GM18951 (cell line): ENCODE measurements at regions of chr17 and their contacts with region 1.

Region 1: DNA sequence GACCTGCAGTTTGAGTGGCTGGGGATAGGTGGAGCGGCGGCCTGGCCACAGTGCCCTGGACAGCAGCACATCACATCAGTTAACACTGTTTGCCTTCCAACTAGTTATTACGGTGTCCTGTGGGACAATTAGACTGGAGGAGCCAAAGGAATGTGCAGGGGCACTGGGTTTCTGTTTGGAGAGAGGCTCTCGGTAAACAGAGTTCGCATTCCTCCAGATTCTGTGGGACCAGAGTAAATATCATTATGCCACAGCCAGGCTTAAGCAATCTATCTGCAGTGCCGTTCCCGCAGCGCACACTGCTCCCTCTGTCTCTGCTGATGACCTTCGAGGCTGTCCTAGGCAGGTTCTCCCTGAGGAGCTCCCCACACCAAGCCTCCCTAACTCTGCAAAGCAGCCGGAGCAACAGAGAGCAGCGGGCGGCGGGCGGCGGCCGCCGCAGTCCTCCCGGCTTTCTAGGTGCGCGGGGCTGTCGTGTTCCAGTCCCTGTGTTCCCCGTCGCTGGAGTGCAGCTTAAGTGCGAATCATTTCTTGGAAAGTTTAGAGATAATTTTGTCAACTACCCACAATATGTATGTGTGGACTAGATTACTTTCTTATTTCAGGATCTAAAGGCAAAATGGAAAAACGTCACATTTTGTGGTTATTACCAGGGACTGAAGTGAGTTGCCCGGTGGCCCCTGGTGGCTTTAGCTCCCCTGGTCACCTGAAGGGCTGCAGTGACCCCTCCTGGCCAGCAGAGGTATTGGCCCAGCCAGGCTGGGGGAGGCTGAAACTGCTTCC is 43.2 kb downstream of the PGS1 start:
- POLR2A ChIP-seq: no peak

Region 2: GRCh38 chr17:78313735-78314648 is 107.7 kb before region 1 on chr17:
- in situ Hi-C with region 1: no loop called
- POLR2A ChIP-seq: peak; percentile 53

Region 3: DNA sequence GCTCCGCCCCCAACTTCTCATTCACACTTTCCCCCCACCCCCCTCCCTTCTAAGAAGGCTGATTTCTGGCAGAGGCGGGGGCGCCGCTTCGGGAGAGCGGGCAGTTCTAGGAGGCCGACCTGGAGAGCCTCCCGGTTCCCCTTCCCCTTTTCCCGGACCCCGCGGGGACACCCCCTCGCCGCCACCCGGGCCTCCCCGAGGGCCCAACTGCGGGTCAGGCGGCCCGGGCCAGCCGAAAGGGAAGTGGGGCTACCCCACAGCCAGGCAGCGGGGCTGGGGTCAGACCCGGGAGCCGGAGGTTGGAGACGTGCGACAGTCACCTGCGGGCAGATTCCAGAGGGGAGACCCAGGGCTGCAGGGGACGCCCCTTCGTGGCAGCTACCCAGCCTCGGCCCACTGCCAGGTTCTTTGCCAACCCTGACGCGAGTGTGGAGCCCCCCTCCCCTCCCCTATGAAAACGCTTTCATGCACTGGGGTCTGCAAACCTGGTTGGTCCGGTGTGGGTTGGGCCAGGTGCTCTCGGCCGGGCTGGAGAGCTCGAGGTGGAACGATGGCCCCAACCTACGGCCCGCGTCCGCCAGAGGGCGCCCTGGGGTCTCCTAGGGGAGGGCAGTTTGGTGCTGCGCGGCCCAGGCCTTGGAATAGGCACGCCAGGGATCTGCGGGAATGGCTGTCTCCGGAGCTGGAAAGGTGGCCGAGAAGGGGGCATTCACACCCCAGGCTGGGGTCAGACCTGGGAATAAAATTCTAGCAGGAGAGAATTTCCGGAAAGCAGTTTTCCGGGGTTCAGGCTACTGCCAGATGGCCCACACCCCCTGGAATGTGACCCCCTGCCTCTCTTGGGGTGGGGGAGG is 61.1 kb before region 1 on chr17:
- in situ Hi-C with region 1: loop called (anchors 10 kb)
- POLR2A ChIP-seq: no peak

Region 4: DNA sequence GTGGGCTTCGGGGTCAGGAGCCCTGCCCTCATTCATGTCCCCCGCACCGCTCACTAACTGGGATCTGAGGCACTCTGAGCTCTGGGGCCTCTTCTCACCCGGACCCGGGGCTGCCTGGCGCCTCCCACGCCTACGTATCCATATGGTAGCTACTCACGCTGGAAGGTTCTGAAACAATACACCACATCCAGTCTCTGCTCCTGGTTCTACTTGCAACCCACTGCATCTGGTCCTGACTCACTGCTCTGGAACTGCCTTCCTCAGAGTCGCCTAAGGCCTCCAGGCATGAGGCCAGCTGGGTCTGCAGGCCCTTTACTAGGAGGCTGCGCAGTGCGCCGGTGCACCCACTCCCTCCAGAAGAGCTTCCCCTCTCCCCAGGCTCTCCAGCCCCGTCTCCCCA is 400.9 kb after region 1 on chr17:
- in situ Hi-C with region 1: no loop called
- POLR2A ChIP-seq: no peak